Ovary (tissue), 10 donors: ENCODE measurements at regions of chr22 and their contacts with region 1.

Region 1: GRCh38 chr22:20507253-20508066 is at the start of gene MED15:
- DNase-seq: peak; percentile 85 to 92 (median 89)
- H3K4me3 ChIP-seq: peak within 1 kb of the TSS; percentile 93
- H3K27ac ChIP-seq: peak within 1 kb of the TSS; percentile 23 to 82
- H3K4me1 ChIP-seq: peaks cover 11% of the 10 kb centered on the region
- H3K27me3 ChIP-seq: no peaks in the 10 kb centered on the region
- CTCF ChIP-seq: no peak
- EP300 ChIP-seq: no peak
- POLR2A ChIP-seq: peak; percentile 83
- total RNA-seq, gene MED15: 21.9 to 79.3 (median 69.5) TPM

Region 2: GRCh38 chr22:20536590-20537324 is 29.3 kb after region 1 on chr22:
- intact Hi-C with region 1: no loop called
- DNase-seq: no peak
- H3K4me3 ChIP-seq: no peak overlapping the region
- H3K27ac ChIP-seq: no peak overlapping the region
- H3K4me1 ChIP-seq: peaks cover 8% of the 10 kb centered on the region
- H3K27me3 ChIP-seq: no peaks in the 10 kb centered on the region
- CTCF ChIP-seq: no peak
- EP300 ChIP-seq: no peak
- POLR2A ChIP-seq: no peak

Region 3: GRCh38 chr22:20550821-20551744 is 43.6 kb after region 1 on chr22:
- intact Hi-C with region 1: loop called in 1 of 4 experiments (anchors 5 kb)
- DNase-seq: peak; percentile 64 to 72 (median 70)
- H3K4me3 ChIP-seq: no peak overlapping the region
- H3K27ac ChIP-seq: peak overlapping the region; percentile 75 to 91
- H3K4me1 ChIP-seq: peaks cover 49% of the 10 kb centered on the region
- H3K27me3 ChIP-seq: no peaks in the 10 kb centered on the region
- CTCF ChIP-seq: no peak
- EP300 ChIP-seq: no peak
- POLR2A ChIP-seq: no peak

Region 4: GRCh38 chr22:20568989-20569769 is 61.7 kb after region 1 on chr22:
- intact Hi-C with region 1: loop called in 2 of 4 experiments (anchors 10 kb)
- DNase-seq: peak in 4 of 5 donors; percentile 57 to 77 (median 64)
- H3K4me3 ChIP-seq: no peak overlapping the region
- H3K27ac ChIP-seq: peak overlapping the region in 1 of 2 donors; percentile 25
- H3K4me1 ChIP-seq: peaks cover 19% of the 10 kb centered on the region
- H3K27me3 ChIP-seq: no peaks in the 10 kb centered on the region
- CTCF ChIP-seq: no peak
- EP300 ChIP-seq: no peak
- POLR2A ChIP-seq: no peak

Region 5: DNA sequence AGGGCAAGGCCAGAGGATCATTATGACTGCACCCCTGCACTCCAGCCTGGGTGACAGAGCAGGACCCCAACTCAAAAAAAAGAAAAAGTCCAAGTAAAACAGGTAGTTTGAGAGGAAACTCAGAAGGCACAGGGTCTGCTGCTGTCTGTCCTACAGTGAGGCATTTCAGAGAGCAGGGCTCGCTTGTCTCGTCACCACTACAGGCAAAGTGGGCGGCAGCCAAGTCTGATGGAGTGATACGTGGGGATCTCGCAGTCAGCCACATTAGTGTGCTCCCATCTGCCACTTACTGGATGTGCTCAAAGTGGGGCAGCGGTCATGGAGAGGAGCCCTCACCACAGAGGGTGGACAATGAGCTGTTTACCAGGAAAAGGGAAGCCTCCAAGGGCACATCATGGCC is 309.1 kb after region 1 on chr22:
- intact Hi-C with region 1: no loop called
- DNase-seq: no peak
- H3K4me3 ChIP-seq: no peak overlapping the region
- H3K27ac ChIP-seq: no peak overlapping the region
- H3K4me1 ChIP-seq: no peaks in the 10 kb centered on the region
- H3K27me3 ChIP-seq: no peaks in the 10 kb centered on the region
- CTCF ChIP-seq: no peak
- EP300 ChIP-seq: no peak
- POLR2A ChIP-seq: no peak